CD4-positive, alpha-beta memory T cell (primary cell): ENCODE measurements at regions of chr2 and their contacts with region 1.

Region 1: GRCh38 chr2:25951071-25951547 is 31.2 kb downstream of the KIF3C start:
- DNase-seq: peak; percentile 61 to 69 (median 64)
- H3K4me3 ChIP-seq: no peak overlapping the region
- H3K4me3 Mint-ChIP-seq: peak overlapping the region in 1 of 8 donors; percentile 26
- H3K27ac ChIP-seq: no peak overlapping the region
- H3K27ac Mint-ChIP-seq: peak overlapping the region in 1 of 7 donors; percentile 18
- H3K4me1 ChIP-seq: no peaks in the 10 kb centered on the region
- H3K4me1 Mint-ChIP-seq: peaks cover 2 to 6% (median 3%) of the 10 kb centered on the region in 4 donors
- H3K27me3 ChIP-seq: no peaks in the 10 kb centered on the region
- H3K27me3 Mint-ChIP-seq: no peaks in the 10 kb centered on the region

Region 2: DNA sequence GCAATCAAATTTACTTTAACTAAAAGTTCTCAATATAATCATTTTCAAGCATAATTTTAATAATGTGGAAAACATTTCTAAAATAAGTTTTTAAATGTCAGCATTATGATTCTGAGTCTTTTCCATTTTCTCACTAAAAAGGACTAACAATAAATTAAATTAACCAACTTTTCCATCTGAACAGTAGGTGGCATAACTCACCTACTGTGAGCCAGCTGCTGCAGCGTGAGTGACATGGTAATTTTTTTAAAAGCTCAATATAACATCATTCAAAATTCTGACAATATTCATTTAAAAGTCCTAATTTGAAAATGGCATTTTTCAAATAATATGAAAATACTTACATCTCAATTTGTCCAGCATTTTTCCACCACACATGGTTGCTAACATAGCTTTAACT is 344.2 kb before region 1 on chr2:
- CTCF ChIA-PET with region 1: interaction called, 5 read pairs
- POLR2A ChIA-PET with region 1: no interaction called
- intact Hi-C with region 1: loop called (anchors 2 kb)
- DNase-seq: peak in 4 of 5 donors; percentile 19 to 39 (median 32)
- H3K4me3 ChIP-seq: no peak overlapping the region
- H3K4me3 Mint-ChIP-seq: no peak overlapping the region
- H3K27ac ChIP-seq: no peak overlapping the region
- H3K27ac Mint-ChIP-seq: no peak overlapping the region
- H3K4me1 ChIP-seq: no peaks in the 10 kb centered on the region
- H3K4me1 Mint-ChIP-seq: peaks cover 1 to 4% (median 4%) of the 10 kb centered on the region in 4 donors
- H3K27me3 ChIP-seq: no peaks in the 10 kb centered on the region
- H3K27me3 Mint-ChIP-seq: no peaks in the 10 kb centered on the region

Region 3: DNA sequence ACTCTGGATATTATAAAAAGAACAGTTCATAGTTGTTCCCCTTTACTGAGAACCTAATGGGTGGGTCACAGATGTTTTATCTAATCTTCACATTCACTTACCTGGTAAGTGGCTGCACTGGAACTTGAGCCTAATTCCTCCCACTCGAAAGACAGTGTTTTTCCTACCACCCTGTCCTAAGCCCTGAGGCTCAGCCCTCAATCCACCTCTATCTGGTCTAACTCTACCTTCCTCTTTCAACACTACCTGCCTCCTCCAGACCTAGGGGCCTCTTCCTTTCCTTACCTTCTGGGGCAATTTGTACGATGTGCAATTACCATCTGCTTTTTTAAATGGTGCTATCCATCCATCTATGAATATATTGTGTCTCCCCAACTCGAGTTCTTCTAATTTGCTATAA is 40.9 kb after region 1 on chr2:
- CTCF ChIA-PET with region 1: interaction called, 22 read pairs
- POLR2A ChIA-PET with region 1: no interaction called
- intact Hi-C with region 1: loop called (anchors 1 kb)
- DNase-seq: no peak
- H3K4me3 ChIP-seq: no peak overlapping the region
- H3K4me3 Mint-ChIP-seq: peak overlapping the region in 4 of 8 donors; percentile 27 to 86 (median 68)
- H3K27ac ChIP-seq: no peak overlapping the region
- H3K27ac Mint-ChIP-seq: peak overlapping the region in 4 of 7 donors; percentile 11 to 78 (median 47)
- H3K4me1 ChIP-seq: peaks cover 9% of the 10 kb centered on the region
- H3K4me1 Mint-ChIP-seq: peaks cover 6 to 14% (median 10%) of the 10 kb centered on the region in 4 donors
- H3K27me3 ChIP-seq: no peaks in the 10 kb centered on the region
- H3K27me3 Mint-ChIP-seq: no peaks in the 10 kb centered on the region

Region 4: GRCh38 chr2:26184555-26185303 is 233.6 kb after region 1 on chr2:
- CTCF ChIA-PET with region 1: interaction called, 6 read pairs
- POLR2A ChIA-PET with region 1: no interaction called
- intact Hi-C with region 1: loop called (anchors 1 kb)
- DNase-seq: peak; percentile 83 to 89 (median 87)
- H3K4me3 ChIP-seq: peak overlapping the region; percentile 24 to 64
- H3K4me3 Mint-ChIP-seq: peak overlapping the region; percentile 83 to 89 (median 86)
- H3K27ac ChIP-seq: peak overlapping the region; percentile 24
- H3K27ac Mint-ChIP-seq: peak overlapping the region in 2 of 7 donors; percentile 46 to 83
- H3K4me1 ChIP-seq: peaks cover 19% of the 10 kb centered on the region
- H3K4me1 Mint-ChIP-seq: peaks cover 10 to 26% (median 18%) of the 10 kb centered on the region in 4 donors
- H3K27me3 ChIP-seq: no peaks in the 10 kb centered on the region
- H3K27me3 Mint-ChIP-seq: peaks cover 8 to 15% of the 10 kb centered on the region in 2 donors

Region 5: DNA sequence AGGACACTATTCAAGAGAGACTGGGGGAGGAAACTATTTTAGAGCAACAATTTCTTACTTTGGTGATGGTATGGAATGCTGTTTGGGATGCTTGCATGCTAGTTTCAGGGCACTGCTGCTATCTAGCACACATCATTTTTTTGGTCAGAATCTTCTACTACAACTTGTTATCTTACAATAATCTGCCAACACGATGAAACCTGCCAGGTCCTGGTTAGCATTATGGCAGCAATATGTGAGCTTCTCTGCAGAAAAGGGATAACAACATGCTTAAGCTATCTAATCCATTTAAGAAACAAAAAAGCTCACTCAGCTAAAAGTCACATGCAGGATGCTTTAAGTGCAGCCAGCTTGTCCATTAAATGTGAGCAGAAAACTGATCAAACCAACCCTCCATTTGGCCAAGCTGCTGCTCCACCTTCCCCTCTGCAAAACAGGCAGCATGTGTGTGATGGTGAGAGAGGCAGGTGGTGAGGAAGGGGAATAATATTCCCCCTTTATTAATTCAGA is 251.9 kb after region 1 on chr2:
- CTCF ChIA-PET with region 1: no interaction called
- POLR2A ChIA-PET with region 1: no interaction called
- intact Hi-C with region 1: no loop called
- DNase-seq: no peak
- H3K4me3 ChIP-seq: no peak overlapping the region
- H3K4me3 Mint-ChIP-seq: no peak overlapping the region
- H3K27ac ChIP-seq: no peak overlapping the region
- H3K27ac Mint-ChIP-seq: peak overlapping the region in 1 of 7 donors; percentile 32
- H3K4me1 ChIP-seq: no peaks in the 10 kb centered on the region
- H3K4me1 Mint-ChIP-seq: no peaks in the 10 kb centered on the region
- H3K27me3 ChIP-seq: no peaks in the 10 kb centered on the region
- H3K27me3 Mint-ChIP-seq: no peaks in the 10 kb centered on the region

Region 6: DNA sequence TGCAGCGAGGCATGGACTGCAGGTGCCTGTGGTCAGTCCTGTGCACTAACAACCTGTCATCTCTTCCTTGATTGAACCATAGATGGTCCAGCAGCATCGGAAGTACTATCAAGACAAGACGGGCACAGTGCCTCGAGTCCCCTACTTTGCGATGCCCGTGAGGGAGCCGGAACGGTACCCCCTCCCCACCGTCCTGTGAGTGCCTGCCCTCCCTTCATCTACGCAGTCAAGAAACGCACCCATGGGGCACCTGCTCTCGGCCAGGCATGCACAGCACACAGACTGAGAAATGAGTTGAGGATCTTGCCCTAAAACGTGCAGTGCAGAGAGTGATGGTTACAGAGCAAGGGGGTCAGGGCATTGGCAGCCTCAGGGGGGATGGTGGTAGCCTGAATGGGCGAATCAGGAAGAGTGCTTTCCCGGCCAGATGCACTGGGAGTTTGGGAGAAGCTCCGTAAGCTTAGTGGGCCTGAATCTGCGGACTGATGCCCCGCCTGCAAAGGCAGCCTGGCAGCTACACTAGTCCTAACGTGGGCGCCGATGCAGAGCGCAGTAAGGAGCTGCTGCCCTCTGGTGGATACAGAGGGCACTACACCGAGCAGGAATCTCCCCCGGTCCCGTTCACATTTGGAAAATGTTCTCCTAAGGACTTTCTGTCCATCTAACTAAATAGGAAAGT is 626.5 kb after region 1 on chr2:
- CTCF ChIA-PET with region 1: interaction called, 12 read pairs
- POLR2A ChIA-PET with region 1: no interaction called
- intact Hi-C with region 1: no loop called
- DNase-seq: peak; percentile 36 to 52 (median 50)
- H3K4me3 ChIP-seq: no peak overlapping the region
- H3K4me3 Mint-ChIP-seq: no peak overlapping the region
- H3K27ac ChIP-seq: no peak overlapping the region
- H3K27ac Mint-ChIP-seq: peak overlapping the region in 1 of 7 donors; percentile 9
- H3K4me1 ChIP-seq: no peaks in the 10 kb centered on the region
- H3K4me1 Mint-ChIP-seq: peaks cover 0 to 4% (median 1%) of the 10 kb centered on the region in 4 donors
- H3K27me3 ChIP-seq: no peaks in the 10 kb centered on the region
- H3K27me3 Mint-ChIP-seq: peaks cover 11 to 26% of the 10 kb centered on the region in 2 donors